ENCODE measurements at regions of chr12 and their contacts with region 1.

Region 1: DNA sequence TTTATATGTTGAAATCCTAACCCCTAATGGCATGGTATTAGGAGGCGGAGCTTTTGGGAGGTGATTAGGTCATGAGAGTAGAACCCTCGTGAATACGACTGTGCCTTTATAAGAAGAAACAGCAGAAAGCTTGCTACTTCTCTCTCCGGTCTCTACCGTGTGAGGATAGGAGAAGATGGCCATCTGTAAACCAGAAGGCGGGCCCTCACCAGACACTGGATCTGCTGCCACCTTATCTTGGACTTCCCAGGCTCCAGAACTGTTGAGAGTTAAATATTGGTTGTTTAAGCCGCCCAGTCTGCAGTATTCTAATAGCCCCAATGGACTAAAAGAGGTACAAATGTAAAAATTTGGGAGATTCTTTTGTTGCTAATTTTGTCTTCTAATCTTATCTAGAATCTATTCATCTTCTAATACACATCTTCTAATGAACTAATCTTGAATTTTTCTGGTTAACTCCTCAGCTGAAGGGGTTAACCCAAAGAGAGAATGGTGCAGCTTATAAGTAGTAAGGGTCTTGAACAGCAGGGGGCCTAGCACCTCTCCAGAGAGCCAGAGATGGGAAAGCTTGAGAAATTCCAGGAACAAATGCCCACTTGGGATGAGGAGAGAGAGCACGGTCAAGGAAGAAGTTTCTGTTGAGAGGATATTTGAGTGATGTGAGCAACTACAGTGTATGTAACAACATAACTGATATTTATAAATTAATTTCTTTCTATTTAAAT is 264.0 kb upstream of the GRIP1 start:
- DNase-seq: no peak
- H3K4me3 Mint-ChIP-seq: no peak overlapping the region
- H3K27ac Mint-ChIP-seq: no peak overlapping the region
- H3K4me1 Mint-ChIP-seq: peaks cover 29% of the 10 kb centered on the region
- H3K27me3 Mint-ChIP-seq: no peaks in the 10 kb centered on the region
- CTCF ChIP-seq: no peak

Region 2: GRCh38 chr12:66851134-66851533 is 91.8 kb before region 1 on chr12:
- CTCF ChIA-PET with region 1: no interaction called
- intact Hi-C with region 1: no loop called
- DNase-seq: no peak
- H3K4me3 Mint-ChIP-seq: no peak overlapping the region
- H3K27ac Mint-ChIP-seq: no peak overlapping the region
- H3K4me1 Mint-ChIP-seq: no peaks in the 10 kb centered on the region
- H3K27me3 Mint-ChIP-seq: no peaks in the 10 kb centered on the region
- CTCF ChIP-seq: no peak

Region 3: GRCh38 chr12:66976526-66976925 is 33.6 kb after region 1 on chr12:
- CTCF ChIA-PET with region 1: no interaction called
- intact Hi-C with region 1: loop called (anchors 1 kb)
- DNase-seq: no peak
- H3K4me3 Mint-ChIP-seq: no peak overlapping the region
- H3K27ac Mint-ChIP-seq: no peak overlapping the region
- H3K4me1 Mint-ChIP-seq: no peaks in the 10 kb centered on the region
- H3K27me3 Mint-ChIP-seq: no peaks in the 10 kb centered on the region
- CTCF ChIP-seq: no peak